PC-9 (cell line): ENCODE measurements at regions of chr1 and their contacts with region 1.

Region 1: GRCh38 chr1:112706908-112707663 is at the start of gene RHOC:
- DNase-seq: peak; percentile 84 to 90
- H3K4me3 ChIP-seq: peak within 1 kb of the TSS; percentile 87
- H3K27ac ChIP-seq: peak within 1 kb of the TSS; percentile 89
- H3K4me1 ChIP-seq: peaks cover 41% of the 10 kb centered on the region
- H3K27me3 ChIP-seq: no peaks in the 10 kb centered on the region
- CTCF ChIP-seq: peak; percentile 93
- total RNA-seq, gene RHOC: 200 and 220 TPM in 2 replicates

Region 2: DNA sequence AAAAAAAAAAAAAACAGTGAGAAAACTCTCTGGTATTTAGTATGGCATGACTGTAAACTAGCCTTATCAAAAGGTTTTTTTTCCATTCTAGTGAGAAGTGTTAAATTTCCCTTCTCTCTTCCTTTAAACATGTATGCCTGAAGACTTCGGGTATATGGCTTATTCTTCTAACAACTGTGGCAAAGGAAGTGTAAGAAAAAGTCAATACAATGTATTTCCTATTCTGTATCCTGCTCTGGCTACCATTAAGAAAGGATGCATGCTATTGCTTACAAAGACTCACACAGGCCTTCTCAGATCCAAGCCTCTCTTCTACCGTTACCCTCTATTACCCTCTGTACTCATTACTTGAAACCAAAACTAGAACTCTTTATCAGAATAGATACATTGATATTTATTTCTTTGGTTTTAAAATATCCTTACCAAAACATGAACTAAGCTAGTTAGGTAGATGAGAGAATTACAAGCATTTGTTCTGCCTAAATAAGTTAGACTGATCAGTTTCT is 1558.7 kb before region 1 on chr1:
- CTCF ChIA-PET with region 1: no interaction called
- POLR2A ChIA-PET with region 1: interaction called, 14 read pairs
- intact Hi-C with region 1: no loop called
- DNase-seq: no peak
- H3K4me3 ChIP-seq: no peak overlapping the region
- H3K27ac ChIP-seq: no peak overlapping the region
- H3K4me1 ChIP-seq: no peaks in the 10 kb centered on the region
- H3K27me3 ChIP-seq: no peaks in the 10 kb centered on the region
- CTCF ChIP-seq: no peak

Region 3: DNA sequence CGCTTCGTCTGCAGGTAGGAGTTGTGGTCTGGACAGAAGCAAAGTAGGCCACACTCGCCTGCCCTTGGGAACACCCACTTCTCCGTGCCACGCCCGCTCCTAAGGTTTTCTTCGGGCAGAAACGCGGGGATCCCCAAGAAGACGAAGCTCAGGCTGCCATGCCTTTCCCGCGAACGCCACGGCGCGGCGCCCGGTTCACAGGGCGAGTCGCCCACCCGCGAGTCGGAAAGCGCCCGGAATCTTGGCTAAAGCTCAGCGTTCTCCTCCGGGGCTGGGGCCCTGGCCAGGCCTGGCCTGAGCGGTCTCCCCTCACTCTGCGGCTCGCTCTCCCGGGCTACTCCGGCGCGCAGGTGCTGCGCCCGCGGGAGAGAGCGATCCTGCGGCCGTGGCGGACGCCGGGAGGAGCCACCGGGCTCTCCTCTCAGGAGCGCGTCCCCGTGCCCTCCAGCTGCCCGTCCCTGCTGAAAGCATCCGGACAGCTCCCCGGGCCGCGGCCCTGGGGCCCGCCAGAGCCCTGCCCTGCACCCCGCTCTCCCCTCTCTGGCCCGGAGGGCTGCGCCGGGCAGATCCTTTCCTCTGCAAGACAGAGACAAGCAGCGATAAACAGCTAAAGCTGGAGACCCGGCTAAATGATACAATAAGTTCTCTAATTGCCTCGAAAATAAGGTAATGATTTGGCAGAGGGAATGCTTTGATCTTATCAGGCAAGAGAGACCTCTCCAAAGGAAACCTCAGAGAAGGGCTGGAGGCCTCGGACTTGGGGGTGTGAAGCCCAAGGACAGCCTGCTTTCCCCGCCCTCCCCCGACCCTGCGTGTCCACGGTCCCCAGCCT is 205.1 kb before region 1 on chr1:
- CTCF ChIA-PET with region 1: no interaction called
- POLR2A ChIA-PET with region 1: no interaction called
- intact Hi-C with region 1: loop called (anchors 2 kb)
- DNase-seq: peak; percentile 55 to 70
- H3K4me3 ChIP-seq: peak overlapping the region; percentile 56
- H3K27ac ChIP-seq: no peak overlapping the region
- H3K4me1 ChIP-seq: 0 out of 2 replicates have a peak, but pooled peaks cover 4% of the 10 kb centered on the region
- H3K27me3 ChIP-seq: no peaks in the 10 kb centered on the region
- CTCF ChIP-seq: peak; percentile 72

Region 4: DNA sequence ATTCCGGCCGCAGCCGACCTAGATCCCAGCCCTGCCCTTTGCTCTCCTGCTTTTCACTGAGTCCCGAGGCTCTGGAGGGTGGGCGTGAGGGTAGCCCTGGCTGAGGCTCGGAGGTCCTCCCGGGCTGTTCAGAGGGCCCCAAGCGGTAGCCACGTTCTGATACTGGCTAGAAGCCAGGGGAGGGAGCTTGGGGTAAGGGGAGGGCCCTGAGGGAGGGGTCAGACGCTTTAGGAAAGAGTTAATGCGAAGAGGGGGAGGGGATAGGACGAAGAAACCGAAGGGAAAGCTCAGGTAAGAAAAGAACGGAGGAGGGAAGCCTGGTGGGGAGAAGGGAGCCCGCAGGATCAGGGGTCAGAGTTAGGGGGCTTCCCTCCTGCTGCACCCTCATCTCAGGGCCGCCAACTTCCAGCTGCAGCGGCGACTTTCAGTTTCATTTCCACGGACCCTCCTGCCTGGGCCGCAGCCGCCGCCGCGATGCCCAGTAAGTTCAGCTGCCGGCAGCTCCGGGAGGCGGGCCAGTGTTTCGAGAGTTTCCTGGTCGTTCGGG is 32.6 kb before region 1 on chr1 and contains the start of gene MOV10:
- CTCF ChIA-PET with region 1: interaction called, 4 read pairs
- POLR2A ChIA-PET with region 1: interaction called, 11 read pairs
- intact Hi-C with region 1: loop called (anchors 1 kb)
- DNase-seq: peak; percentile 64 to 69
- H3K4me3 ChIP-seq: peak within 1 kb of the TSS; percentile 82
- H3K27ac ChIP-seq: peak within 1 kb of the TSS; percentile 48
- H3K4me1 ChIP-seq: peaks cover 21% of the 10 kb centered on the region
- H3K27me3 ChIP-seq: no peaks in the 10 kb centered on the region
- CTCF ChIP-seq: no peak
- total RNA-seq, gene MOV10: 73.7 and 78.3 TPM in 2 replicates

Region 5: DNA sequence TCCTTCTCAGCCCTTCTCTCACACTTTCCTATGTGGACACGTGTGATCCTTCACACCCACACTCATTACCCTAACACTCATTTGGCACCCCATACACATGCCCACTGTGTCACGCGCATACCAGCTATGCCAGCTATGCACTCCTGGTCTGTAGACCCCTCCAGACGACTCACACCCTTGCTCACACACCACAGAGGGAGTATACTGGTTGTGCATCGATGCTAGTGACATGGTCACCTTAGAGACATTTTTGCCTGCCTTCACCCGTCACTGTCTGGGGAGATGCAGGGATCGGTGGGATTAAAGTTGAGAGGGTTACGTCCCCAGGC is 16.4 kb after region 1 on chr1:
- CTCF ChIA-PET with region 1: no interaction called
- POLR2A ChIA-PET with region 1: no interaction called
- intact Hi-C with region 1: no loop called
- DNase-seq: no peak
- H3K4me3 ChIP-seq: no peak overlapping the region
- H3K27ac ChIP-seq: no peak overlapping the region
- H3K4me1 ChIP-seq: no peaks in the 10 kb centered on the region
- H3K27me3 ChIP-seq: no peaks in the 10 kb centered on the region
- CTCF ChIP-seq: no peak

Region 6: DNA sequence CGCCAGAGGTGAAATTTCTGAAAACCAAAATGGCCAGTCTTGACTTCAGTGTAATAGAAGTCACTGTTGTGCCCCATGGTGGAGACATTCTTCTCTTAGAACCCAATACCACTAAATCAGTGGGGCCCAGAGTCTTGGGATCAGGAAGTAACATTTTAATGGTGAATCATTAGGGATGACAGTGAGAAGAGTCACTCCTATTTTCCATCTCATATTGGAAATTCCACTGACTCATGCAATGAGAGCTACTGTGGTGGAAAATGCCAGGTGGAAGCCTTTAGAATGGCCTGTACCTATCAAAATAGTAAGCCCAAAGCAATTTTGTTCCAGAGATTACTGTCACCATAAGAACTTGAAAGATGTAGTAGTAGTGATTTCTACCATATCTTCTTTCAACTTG is 28.7 kb after region 1 on chr1:
- CTCF ChIA-PET with region 1: no interaction called
- POLR2A ChIA-PET with region 1: no interaction called
- intact Hi-C with region 1: no loop called
- DNase-seq: peak; percentile 18 to 90
- H3K4me3 ChIP-seq: no peak overlapping the region
- H3K27ac ChIP-seq: peak overlapping the region; percentile 36
- H3K4me1 ChIP-seq: peaks cover 12% of the 10 kb centered on the region; the same call in 1 of the 2 replicates
- H3K27me3 ChIP-seq: no peaks in the 10 kb centered on the region
- CTCF ChIP-seq: no peak

Region 7: GRCh38 chr1:112803906-112804762 is 97.0 kb after region 1 on chr1:
- CTCF ChIA-PET with region 1: no interaction called
- POLR2A ChIA-PET with region 1: interaction called, 16 read pairs
- intact Hi-C with region 1: no loop called
- DNase-seq: peak; percentile 68 to 78
- H3K4me3 ChIP-seq: no peak overlapping the region
- H3K27ac ChIP-seq: no peak overlapping the region
- H3K4me1 ChIP-seq: peaks cover 21% of the 10 kb centered on the region
- H3K27me3 ChIP-seq: no peaks in the 10 kb centered on the region
- CTCF ChIP-seq: peak; percentile 96